HepG2 (cell line): ENCODE measurements at regions of chr6 and their contacts with region 1.

Region 1: GRCh38 chr6:80502871-80503270 is 396.4 kb downstream of the BCKDHB start:
- DNase-seq: no peak
- ATAC-seq: no peak
- H3K4me3 ChIP-seq: no peak overlapping the region
- H3K27ac ChIP-seq: peak overlapping the region; percentile 50
- H3K4me1 ChIP-seq: peaks cover 59% of the 10 kb centered on the region
- H3K27me3 ChIP-seq: no peaks in the 10 kb centered on the region
- CTCF ChIP-seq: no peak
- EP300 ChIP-seq: no peak
- POLR2A ChIP-seq: no peak
- RAD21 ChIP-seq: no peak

Region 2: DNA sequence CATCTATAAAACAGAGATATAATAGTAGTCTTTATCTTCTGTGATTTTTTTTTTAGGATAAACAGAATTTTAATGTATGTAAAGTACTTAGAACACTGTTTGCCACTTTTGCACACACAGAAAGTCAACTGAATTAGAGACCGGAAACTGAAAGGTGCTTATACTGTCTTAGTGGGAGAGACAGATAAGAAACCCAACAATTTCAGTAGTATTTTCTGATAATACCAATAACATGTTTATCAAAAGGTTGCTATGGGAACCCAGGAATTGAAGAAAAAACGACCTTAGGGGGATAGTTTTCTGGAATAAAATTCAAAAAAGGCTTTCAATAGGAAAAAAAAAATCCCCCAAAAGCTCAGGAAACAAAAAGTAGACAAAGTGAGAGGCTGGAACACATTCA is 257.8 kb before region 1 on chr6:
- CTCF ChIA-PET with region 1: no interaction called
- POLR2A ChIA-PET with region 1: no interaction called
- in situ Hi-C with region 1: no loop called
- intact Hi-C with region 1: no loop called
- DNase-seq: no peak
- ATAC-seq: no peak
- H3K4me3 ChIP-seq: no peak overlapping the region
- H3K27ac ChIP-seq: no peak overlapping the region
- H3K4me1 ChIP-seq: no peaks in the 10 kb centered on the region
- H3K27me3 ChIP-seq: no peaks in the 10 kb centered on the region
- CTCF ChIP-seq: no peak
- EP300 ChIP-seq: no peak
- POLR2A ChIP-seq: no peak
- RAD21 ChIP-seq: no peak

Region 3: DNA sequence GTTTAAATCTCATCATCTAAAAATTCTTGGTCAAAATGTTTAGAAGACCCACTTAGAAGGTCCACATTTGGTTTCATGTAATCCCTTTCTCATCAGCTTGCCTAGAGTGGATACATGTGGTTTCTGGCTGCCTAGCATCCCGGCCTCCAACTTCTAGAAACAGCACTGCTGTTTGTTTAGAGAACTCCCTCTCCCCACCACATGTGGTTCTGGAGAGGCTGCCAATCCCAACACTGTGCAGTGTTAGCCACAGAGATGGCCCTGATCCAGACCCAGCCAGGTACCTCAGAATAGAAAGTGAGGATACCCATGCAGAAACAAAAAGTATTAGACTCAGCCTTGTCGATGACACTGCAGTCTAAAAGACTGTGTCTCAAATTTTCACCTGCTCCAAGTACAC is 154.6 kb before region 1 on chr6:
- CTCF ChIA-PET with region 1: no interaction called
- POLR2A ChIA-PET with region 1: no interaction called
- in situ Hi-C with region 1: no loop called
- intact Hi-C with region 1: no loop called
- DNase-seq: no peak
- ATAC-seq: no peak
- H3K4me3 ChIP-seq: no peak overlapping the region
- H3K27ac ChIP-seq: no peak overlapping the region
- H3K4me1 ChIP-seq: no peaks in the 10 kb centered on the region
- H3K27me3 ChIP-seq: no peaks in the 10 kb centered on the region
- CTCF ChIP-seq: no peak
- EP300 ChIP-seq: no peak
- POLR2A ChIP-seq: no peak
- RAD21 ChIP-seq: no peak

Region 4: DNA sequence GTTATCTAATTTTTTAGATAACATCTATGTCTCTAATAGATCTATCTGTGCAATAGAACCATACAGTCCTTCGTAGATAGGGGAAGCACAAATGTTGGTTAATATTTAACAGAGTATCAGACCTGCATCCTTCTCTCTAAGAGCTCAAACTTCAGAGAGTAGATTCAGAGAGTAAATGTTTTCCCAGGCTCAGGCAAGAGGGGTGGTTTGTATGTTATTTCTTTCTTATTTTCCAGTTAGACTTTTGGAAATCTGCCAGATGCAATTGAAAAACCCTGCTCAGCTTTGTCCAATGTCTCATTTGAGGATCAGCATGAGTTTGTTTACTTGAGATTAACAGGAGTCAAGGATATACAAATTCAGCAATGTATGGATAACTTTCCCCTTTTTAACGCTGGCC is 34.5 kb before region 1 on chr6:
- CTCF ChIA-PET with region 1: no interaction called
- POLR2A ChIA-PET with region 1: no interaction called
- in situ Hi-C with region 1: no loop called
- intact Hi-C with region 1: loop called (anchors 1 kb)
- DNase-seq: peak; percentile 86
- ATAC-seq: peak; percentile 100
- H3K4me3 ChIP-seq: peak overlapping the region in 1 of 3 experiments; percentile 11; a peak in 1 of 6 replicates
- H3K27ac ChIP-seq: no peak overlapping the region
- H3K4me1 ChIP-seq: peaks cover 20% of the 10 kb centered on the region
- H3K27me3 ChIP-seq: no peaks in the 10 kb centered on the region
- CTCF ChIP-seq: no peak
- EP300 ChIP-seq: peak in 1 of 2 experiments; percentile 35; a peak in 1 of 4 replicates
- POLR2A ChIP-seq: no peak
- RAD21 ChIP-seq: no peak